ENCODE measurements at regions of chr14 and their contacts with region 1.

Region 1: GRCh38 chr14:77457522-77458290 is at the starts of genes AHSA1 and VIPAS39:
- DNase-seq: peak; percentile 99
- H3K4me3 ChIP-seq: peak within 1 kb of the TSS; percentile 45 to 86 (median 66)
- H3K27ac ChIP-seq: peak within 1 kb of the TSS; percentile 76
- H3K4me1 ChIP-seq: peaks cover 21% of the 10 kb centered on the region
- H3K27me3 ChIP-seq: no peaks in the 10 kb centered on the region
- CTCF ChIP-seq: no peak
- POLR2A ChIP-seq: peak; percentile 53
- total RNA-seq, gene AHSA1: 158 and 166 TPM in 2 replicates
- total RNA-seq, gene VIPAS39: 22.2 and 24.2 TPM in 2 replicates

Region 2: GRCh38 chr14:75577729-75578101 is 1880.0 kb before region 1 on chr14:
- CTCF ChIA-PET with region 1: no interaction called
- POLR2A ChIA-PET with region 1: no interaction called
- dilution Hi-C with region 1: no loop called
- intact Hi-C with region 1: no loop called
- DNase-seq: peak; percentile 82
- H3K4me3 ChIP-seq: peak overlapping the region; percentile 50 to 83 (median 64)
- H3K27ac ChIP-seq: no peak overlapping the region
- H3K4me1 ChIP-seq: peaks cover 18% of the 10 kb centered on the region
- H3K27me3 ChIP-seq: peaks cover 0 to 4% of the 10 kb centered on the region in 2 experiments
- CTCF ChIP-seq: peak; percentile 70 to 83
- POLR2A ChIP-seq: no peak

Region 3: GRCh38 chr14:77151918-77152588 is 305.7 kb before region 1 on chr14:
- CTCF ChIA-PET with region 1: interaction called, 4 read pairs
- POLR2A ChIA-PET with region 1: no interaction called
- dilution Hi-C with region 1: no loop called
- intact Hi-C with region 1: loop called (anchors 5 kb)
- DNase-seq: peak; percentile 28
- H3K4me3 ChIP-seq: no peak overlapping the region
- H3K27ac ChIP-seq: no peak overlapping the region
- H3K4me1 ChIP-seq: no peaks in the 10 kb centered on the region
- H3K27me3 ChIP-seq: peaks cover 11 to 19% of the 10 kb centered on the region in 2 experiments
- CTCF ChIP-seq: no peak
- POLR2A ChIP-seq: no peak

Region 4: GRCh38 chr14:77320238-77320935 is 137.3 kb before region 1 on chr14 and contains the start of gene POMT2:
- CTCF ChIA-PET with region 1: interaction called, 6 read pairs
- POLR2A ChIA-PET with region 1: interaction called, 3 read pairs
- dilution Hi-C with region 1: no loop called
- intact Hi-C with region 1: loop called (anchors 1 kb)
- DNase-seq: peak; percentile 94
- H3K4me3 ChIP-seq: peak within 1 kb of the TSS; percentile 66 to 93 (median 76)
- H3K27ac ChIP-seq: peak within 1 kb of the TSS; percentile 94
- H3K4me1 ChIP-seq: peaks cover 17% of the 10 kb centered on the region
- H3K27me3 ChIP-seq: no peaks in the 10 kb centered on the region
- CTCF ChIP-seq: peak; percentile 33 to 44
- POLR2A ChIP-seq: no peak
- total RNA-seq, gene POMT2: 43.2 and 48.2 TPM in 2 replicates

Region 5: DNA sequence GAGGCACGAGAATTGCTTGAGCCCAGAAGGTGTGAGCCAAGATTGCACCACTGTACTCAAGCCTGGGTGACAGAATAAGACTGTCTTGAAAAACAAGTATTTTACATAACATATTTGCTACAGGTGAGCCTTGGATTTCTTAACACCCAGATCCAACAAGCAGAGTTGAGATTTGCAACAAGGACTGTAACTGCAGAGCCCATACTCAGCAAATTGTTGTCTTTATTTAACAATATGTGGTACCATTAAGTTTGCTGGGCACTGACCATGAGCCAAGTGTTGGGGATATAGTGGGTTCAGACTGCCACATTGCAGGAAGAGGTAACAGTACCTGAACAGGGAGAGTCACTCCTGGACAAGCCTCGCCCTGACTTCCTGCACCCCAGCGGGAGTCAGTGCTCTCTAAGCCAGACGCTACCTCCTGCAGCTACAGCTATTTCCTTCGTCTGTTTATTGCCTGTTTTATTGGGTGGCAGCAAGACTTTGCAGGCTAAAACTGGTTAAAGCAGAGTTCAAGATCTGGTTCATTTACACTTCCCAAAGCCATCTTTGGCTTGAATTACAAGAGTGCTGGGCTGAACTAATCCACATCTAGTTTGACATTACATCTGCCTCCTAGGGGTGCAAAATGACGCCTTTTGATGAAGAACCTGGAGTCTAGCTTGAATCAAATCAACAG is 12.6 kb after region 1 on chr14:
- CTCF ChIA-PET with region 1: interaction called, 12 read pairs
- POLR2A ChIA-PET with region 1: no interaction called
- dilution Hi-C with region 1: no loop called
- intact Hi-C with region 1: no loop called
- DNase-seq: no peak
- H3K4me3 ChIP-seq: no peak overlapping the region
- H3K27ac ChIP-seq: no peak overlapping the region
- H3K4me1 ChIP-seq: no peaks in the 10 kb centered on the region
- H3K27me3 ChIP-seq: no peaks in the 10 kb centered on the region
- CTCF ChIP-seq: no peak
- POLR2A ChIP-seq: no peak

Region 6: DNA sequence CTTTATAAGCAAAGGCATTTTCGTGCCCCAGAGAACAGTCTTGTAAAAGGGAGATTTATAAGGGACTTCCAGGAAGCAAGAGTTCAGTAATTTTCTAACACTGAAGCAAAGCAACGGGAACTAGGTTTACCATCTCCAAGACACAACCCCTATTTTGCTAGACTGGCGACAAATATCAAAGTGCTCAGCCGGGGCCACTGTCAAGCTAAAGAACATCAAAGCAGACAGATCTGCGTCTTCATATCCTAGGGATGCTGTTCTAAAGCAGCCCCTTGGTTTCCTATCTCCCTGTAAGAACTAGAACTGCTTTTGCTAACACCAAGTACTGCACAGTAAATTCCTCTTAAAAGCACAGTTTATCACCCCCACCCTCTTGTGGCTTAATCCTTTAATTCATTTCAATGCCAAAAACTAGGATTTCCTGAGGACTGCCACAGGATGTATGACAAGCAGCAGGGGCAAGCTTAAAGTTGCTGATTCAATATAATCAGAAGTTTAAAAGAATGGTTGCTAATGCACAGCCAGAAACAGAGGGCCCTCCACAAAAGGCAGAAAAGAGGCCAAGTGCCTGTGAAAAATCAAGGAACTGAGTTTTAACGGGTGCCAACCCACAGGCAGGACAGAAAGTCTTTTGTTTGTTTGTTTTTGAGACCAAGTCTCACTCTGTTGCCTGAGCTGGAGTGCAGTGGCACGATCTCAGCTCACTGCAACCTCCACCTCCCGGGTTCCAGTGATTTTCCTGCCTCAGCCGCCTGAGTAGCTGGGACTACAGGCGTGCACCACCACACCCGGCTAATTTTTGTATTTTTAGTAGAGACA is 84.9 kb after region 1 on chr14:
- CTCF ChIA-PET with region 1: interaction called, 25 read pairs
- POLR2A ChIA-PET with region 1: interaction called, 4 read pairs
- dilution Hi-C with region 1: no loop called
- intact Hi-C with region 1: loop called (anchors 2 kb)
- DNase-seq: peak; percentile 91
- H3K4me3 ChIP-seq: peak overlapping the region in 1 of 3 experiments; percentile 47
- H3K27ac ChIP-seq: peak overlapping the region; percentile 79
- H3K4me1 ChIP-seq: peaks cover 34% of the 10 kb centered on the region
- H3K27me3 ChIP-seq: no peaks in the 10 kb centered on the region
- CTCF ChIP-seq: no peak
- POLR2A ChIP-seq: no peak

Region 7: DNA sequence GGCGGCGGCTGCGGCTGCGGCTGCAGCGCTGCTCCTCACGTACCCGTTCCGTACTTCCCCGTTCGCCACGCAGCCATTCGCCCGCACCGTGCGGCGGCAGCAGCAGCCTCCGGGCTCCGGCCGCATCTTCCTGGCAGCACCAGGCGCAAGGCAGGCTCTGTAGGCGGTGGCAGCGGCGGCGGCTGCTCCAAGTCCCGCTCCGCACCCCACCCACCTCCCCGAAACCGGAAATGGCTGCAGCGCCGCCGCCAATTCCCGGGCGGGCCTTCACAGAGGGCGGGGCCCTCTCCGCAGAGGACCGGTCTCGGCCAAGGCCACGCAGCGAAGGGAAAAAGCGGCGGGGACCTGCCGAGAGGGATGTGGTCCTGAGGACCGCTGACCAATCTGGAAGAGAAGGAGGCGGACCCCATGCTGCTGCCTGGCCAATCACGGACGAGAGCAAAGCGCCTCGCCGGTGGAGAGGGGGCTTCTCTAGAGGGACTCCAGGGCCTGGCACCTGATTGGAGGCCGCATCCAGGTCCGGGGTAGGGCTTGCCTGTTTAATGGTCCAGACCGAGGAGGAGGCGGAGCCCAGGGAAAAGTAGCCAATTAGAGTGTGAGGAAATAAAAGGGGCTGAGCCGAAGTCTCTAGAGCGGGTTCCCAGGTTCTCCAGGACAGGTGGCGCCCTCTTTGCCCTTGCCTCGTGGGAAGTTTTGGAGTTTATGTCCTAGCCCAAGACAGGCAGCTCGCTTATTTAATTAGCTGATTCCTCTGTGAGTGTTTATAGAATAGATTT is 158.9 kb after region 1 on chr14 and contains the start of gene SPTLC2:
- CTCF ChIA-PET with region 1: interaction called, 5 read pairs
- POLR2A ChIA-PET with region 1: no interaction called
- dilution Hi-C with region 1: no loop called
- intact Hi-C with region 1: loop called (anchors 1 kb)
- DNase-seq: peak; percentile 100
- H3K4me3 ChIP-seq: peak within 1 kb of the TSS; percentile 86 to 94 (median 90)
- H3K27ac ChIP-seq: peak within 1 kb of the TSS; percentile 14
- H3K4me1 ChIP-seq: peaks cover 25% of the 10 kb centered on the region
- H3K27me3 ChIP-seq: peaks cover 0 to 4% of the 10 kb centered on the region in 2 experiments
- CTCF ChIP-seq: no peak
- POLR2A ChIP-seq: peak; percentile 76
- total RNA-seq, gene SPTLC2: 57.2 and 71.3 TPM in 2 replicates

Region 8: GRCh38 chr14:77707724-77708408 is 250.2 kb after region 1 on chr14 and contains the starts of genes ALKBH1 and SLIRP:
- CTCF ChIA-PET with region 1: interaction called, 13 read pairs
- POLR2A ChIA-PET with region 1: no interaction called
- dilution Hi-C with region 1: no loop called
- intact Hi-C with region 1: loop called (anchors 1 kb)
- DNase-seq: peak; percentile 85
- H3K4me3 ChIP-seq: peak within 1 kb of the TSS; percentile 44 to 98 (median 98)
- H3K27ac ChIP-seq: peak within 1 kb of the TSS; percentile 19
- H3K4me1 ChIP-seq: peaks cover 21% of the 10 kb centered on the region
- H3K27me3 ChIP-seq: no peaks in the 10 kb centered on the region
- CTCF ChIP-seq: no peak
- POLR2A ChIP-seq: peak; percentile 94
- total RNA-seq, gene ALKBH1: 13.1 and 14.8 TPM in 2 replicates
- total RNA-seq, gene SLIRP: 160 and 177 TPM in 2 replicates

Measured in endothelial cell of umbilical vein (primary cell).